Activated CD8-positive, alpha-beta T cell treated with anti-CD3 and anti-CD28 coated beads for 36 hours (primary cell): ENCODE measurements at regions of chr19 and their contacts with region 1.

Region 1: GRCh38 chr19:32976208-32976805 is 4.3 kb downstream of the FAAP24 start:
- DNase-seq: peak; percentile 88
- ATAC-seq: no peak
- H3K4me3 Mint-ChIP-seq: no peak overlapping the region
- H3K27ac Mint-ChIP-seq: no peak overlapping the region
- H3K4me1 Mint-ChIP-seq: peaks cover under 1% of the 10 kb centered on the region
- H3K27me3 Mint-ChIP-seq: no peaks in the 10 kb centered on the region
- CTCF ChIP-seq: peak; percentile 84

Region 2: GRCh38 chr19:32988724-32989123 is 12.4 kb after region 1 on chr19:
- CTCF ChIA-PET with region 1: interaction called, 12 read pairs
- POLR2A ChIA-PET with region 1: no interaction called
- intact Hi-C with region 1: no loop called
- DNase-seq: no peak
- ATAC-seq: no peak
- H3K4me3 Mint-ChIP-seq: no peak overlapping the region
- H3K27ac Mint-ChIP-seq: no peak overlapping the region
- H3K4me1 Mint-ChIP-seq: no peaks in the 10 kb centered on the region
- H3K27me3 Mint-ChIP-seq: no peaks in the 10 kb centered on the region
- CTCF ChIP-seq: no peak

Region 3: GRCh38 chr19:33118643-33119042 is 142.3 kb after region 1 on chr19:
- CTCF ChIA-PET with region 1: interaction called, 20 read pairs
- POLR2A ChIA-PET with region 1: no interaction called
- intact Hi-C with region 1: loop called (anchors 5 kb)
- DNase-seq: no peak
- ATAC-seq: no peak
- H3K4me3 Mint-ChIP-seq: no peak overlapping the region
- H3K27ac Mint-ChIP-seq: no peak overlapping the region
- H3K4me1 Mint-ChIP-seq: no peaks in the 10 kb centered on the region
- H3K27me3 Mint-ChIP-seq: no peaks in the 10 kb centered on the region
- CTCF ChIP-seq: no peak

Region 4: DNA sequence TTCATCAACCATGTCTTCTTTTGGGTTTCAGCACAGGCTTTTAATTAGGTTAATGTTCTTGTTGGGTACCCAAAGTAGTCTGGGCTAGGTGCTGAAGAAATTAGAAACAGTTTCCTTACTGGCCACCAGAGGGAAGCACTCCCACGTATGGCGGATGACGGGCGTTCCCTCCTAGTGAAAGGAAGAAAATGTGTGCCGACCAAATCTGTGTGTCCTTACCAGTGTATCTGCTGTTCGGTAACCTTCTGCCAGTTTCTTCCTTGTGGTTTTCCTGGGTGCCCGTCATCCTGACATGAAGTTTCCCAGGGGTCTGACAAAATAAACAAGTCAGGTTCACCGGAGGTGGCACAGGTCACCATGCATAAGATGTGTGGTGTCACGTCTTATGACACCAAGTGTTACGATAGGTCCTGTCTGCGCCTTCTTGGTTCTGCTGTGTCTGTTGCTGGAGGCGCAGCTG is 149.7 kb after region 1 on chr19:
- CTCF ChIA-PET with region 1: interaction called, 20 read pairs
- POLR2A ChIA-PET with region 1: no interaction called
- intact Hi-C with region 1: no loop called
- DNase-seq: peak; percentile 72
- ATAC-seq: peak; percentile 97
- H3K4me3 Mint-ChIP-seq: no peak overlapping the region
- H3K27ac Mint-ChIP-seq: no peak overlapping the region
- H3K4me1 Mint-ChIP-seq: peaks cover 2% of the 10 kb centered on the region
- H3K27me3 Mint-ChIP-seq: no peaks in the 10 kb centered on the region
- CTCF ChIP-seq: peak; percentile 79